Endothelial cell of umbilical vein (primary cell): ENCODE measurements at regions of chrX and their contacts with region 1.

Region 1: GRCh38 chrX:150568320-150569154 is at the start of gene MTM1:
- DNase-seq: peak; percentile 95
- H3K4me3 ChIP-seq: peak within 1 kb of the TSS; percentile 54 to 92 (median 75)
- H3K27ac ChIP-seq: peak within 1 kb of the TSS; percentile 21
- H3K4me1 ChIP-seq: peaks cover 11% of the 10 kb centered on the region
- H3K27me3 ChIP-seq: no peaks in the 10 kb centered on the region
- CTCF ChIP-seq: no peak
- POLR2A ChIP-seq: no peak
- total RNA-seq, gene MTM1: 10.1 and 13.2 TPM in 2 replicates

Region 2: GRCh38 chrX:150547375-150548115 is 21.0 kb before region 1 on chrX:
- CTCF ChIA-PET with region 1: no interaction called
- POLR2A ChIA-PET with region 1: interaction called, 3 read pairs
- dilution Hi-C with region 1: no loop called
- intact Hi-C with region 1: loop called (anchors 1 kb)
- DNase-seq: peak; percentile 47
- H3K4me3 ChIP-seq: peak overlapping the region in 1 of 3 experiments; percentile 14
- H3K27ac ChIP-seq: no peak overlapping the region
- H3K4me1 ChIP-seq: peaks cover 9% of the 10 kb centered on the region
- H3K27me3 ChIP-seq: no peaks in the 10 kb centered on the region
- CTCF ChIP-seq: no peak
- POLR2A ChIP-seq: no peak

Region 3: DNA sequence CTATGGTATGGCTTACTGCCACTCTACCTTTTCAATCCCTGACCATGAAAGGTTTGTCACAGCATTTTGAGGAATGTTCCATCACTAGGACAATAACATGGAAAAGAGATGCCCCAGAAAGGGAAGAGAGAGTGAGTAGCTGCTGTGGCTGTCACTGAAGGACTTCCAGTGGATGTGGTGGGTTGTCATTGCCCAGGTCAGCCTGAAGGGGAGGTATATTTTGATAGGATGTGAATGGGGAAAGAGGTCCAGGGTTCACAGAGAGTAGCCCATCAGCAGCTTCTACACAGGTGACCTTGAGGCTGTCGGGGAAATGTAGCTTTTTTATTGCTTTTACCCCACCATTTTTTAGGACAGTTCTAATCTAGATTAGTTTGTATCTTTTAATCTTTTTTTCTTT is 30.7 kb after region 1 on chrX:
- CTCF ChIA-PET with region 1: no interaction called
- POLR2A ChIA-PET with region 1: no interaction called
- dilution Hi-C with region 1: no loop called
- intact Hi-C with region 1: no loop called
- DNase-seq: no peak
- H3K4me3 ChIP-seq: no peak overlapping the region
- H3K27ac ChIP-seq: no peak overlapping the region
- H3K4me1 ChIP-seq: no peaks in the 10 kb centered on the region
- H3K27me3 ChIP-seq: no peaks in the 10 kb centered on the region
- CTCF ChIP-seq: no peak
- POLR2A ChIP-seq: no peak

Region 4: GRCh38 chrX:150649096-150649870 is 80.7 kb after region 1 on chrX:
- CTCF ChIA-PET with region 1: no interaction called
- POLR2A ChIA-PET with region 1: no interaction called
- dilution Hi-C with region 1: no loop called
- intact Hi-C with region 1: loop called (anchors 1 kb)
- DNase-seq: peak; percentile 82
- H3K4me3 ChIP-seq: peak overlapping the region in 1 of 3 experiments; percentile 9
- H3K27ac ChIP-seq: peak overlapping the region; percentile 85
- H3K4me1 ChIP-seq: peaks cover 38% of the 10 kb centered on the region
- H3K27me3 ChIP-seq: no peaks in the 10 kb centered on the region
- CTCF ChIP-seq: no peak
- POLR2A ChIP-seq: no peak